ENCODE measurements at regions of chr14 and their contacts with region 1.

Region 1: DNA sequence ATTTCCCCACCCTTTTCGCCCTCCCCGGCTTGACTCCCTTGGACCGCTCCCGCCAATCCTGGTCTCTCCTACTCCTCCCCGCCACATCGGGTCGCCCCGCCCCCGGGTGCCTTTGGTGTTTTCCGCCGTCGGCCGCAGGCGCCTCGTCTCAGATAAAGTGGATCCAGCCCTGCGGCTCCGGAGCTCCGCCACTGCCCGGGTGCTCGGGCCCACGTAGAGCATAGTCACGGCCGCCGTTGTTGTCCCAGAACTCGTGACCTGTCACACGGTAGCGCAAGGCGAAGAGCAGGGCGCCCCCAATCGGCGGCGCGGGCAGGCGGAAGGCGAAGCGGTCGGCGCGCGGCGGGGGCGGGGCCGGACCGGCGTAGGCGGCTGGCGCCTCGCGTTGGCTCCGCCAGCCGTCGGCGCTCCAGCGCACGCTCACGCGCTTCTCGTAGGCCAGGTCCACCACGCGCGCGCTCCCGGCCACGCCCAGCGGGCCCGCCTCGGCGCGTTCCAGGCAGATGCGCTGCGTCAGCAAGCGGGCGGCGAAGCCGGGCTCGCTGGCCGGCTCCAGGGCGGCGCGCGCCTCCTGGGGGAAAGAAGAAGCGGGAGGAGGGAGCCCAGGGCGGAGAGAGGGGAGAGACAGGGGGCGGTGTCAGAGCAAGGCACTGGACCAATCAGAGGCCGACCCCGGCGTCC is 1.2 kb downstream of the PPP1R3E start:
- DNase-seq: peak; percentile 99
- ATAC-seq: peak; percentile 78
- H3K4me3 Mint-ChIP-seq: peak overlapping the region; percentile 99
- H3K27ac Mint-ChIP-seq: peak overlapping the region; percentile 90
- H3K4me1 Mint-ChIP-seq: peaks cover 37% of the 10 kb centered on the region
- H3K27me3 Mint-ChIP-seq: no peaks in the 10 kb centered on the region
- CTCF ChIP-seq: no peak

Region 2: DNA sequence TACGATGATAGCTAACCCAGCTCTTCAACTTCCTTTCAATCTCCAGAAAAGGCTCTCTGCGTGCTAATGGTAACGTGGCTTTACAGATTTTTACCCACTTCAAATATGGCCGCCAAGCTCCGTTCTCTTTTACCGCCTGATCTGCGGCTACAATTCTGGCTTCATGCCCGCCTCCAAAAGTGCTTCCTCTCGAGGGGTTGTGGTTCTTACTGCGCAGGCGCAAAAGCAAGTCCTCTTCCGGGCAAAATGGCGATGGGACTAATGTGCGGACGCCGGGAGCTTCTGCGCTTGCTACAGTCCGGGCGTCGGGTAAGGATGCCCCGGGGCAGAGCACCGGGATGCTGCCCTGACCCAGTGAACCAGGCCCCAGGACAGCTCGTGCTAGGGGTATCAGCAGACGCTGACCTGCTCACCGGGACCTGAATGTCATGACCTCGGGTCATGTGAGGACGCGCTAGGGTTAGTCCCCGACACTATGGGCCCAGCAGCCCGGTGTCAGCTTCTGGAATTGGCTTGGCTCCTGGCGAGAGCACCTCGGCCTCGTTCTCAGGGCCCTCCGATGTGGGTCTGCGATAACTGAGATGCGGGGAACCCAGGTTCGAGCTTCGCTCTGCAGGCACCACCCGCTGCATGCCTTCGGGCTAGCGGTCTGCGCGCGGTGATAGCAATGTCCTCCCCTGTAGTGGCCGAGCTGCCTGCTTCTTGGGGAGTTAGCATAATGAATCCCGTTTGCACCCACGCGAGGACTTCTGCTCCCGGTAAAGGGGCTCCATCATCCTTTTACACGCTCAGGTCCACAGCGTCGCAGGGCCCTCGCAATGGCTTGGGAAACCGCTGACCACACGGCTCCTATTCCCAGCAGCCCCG is 534.7 kb before region 1 on chr14 and contains the start of gene OXA1L:
- CTCF ChIA-PET with region 1: no interaction called
- POLR2A ChIA-PET with region 1: interaction called, 12 read pairs
- intact Hi-C with region 1: loop called (anchors 5 kb)
- DNase-seq: peak; percentile 79
- ATAC-seq: peak; percentile 89
- H3K4me3 Mint-ChIP-seq: peak within 1 kb of the TSS; percentile 93
- H3K27ac Mint-ChIP-seq: peak within 1 kb of the TSS; percentile 97
- H3K4me1 Mint-ChIP-seq: peaks cover 35% of the 10 kb centered on the region
- H3K27me3 Mint-ChIP-seq: no peaks in the 10 kb centered on the region
- CTCF ChIP-seq: no peak
- total RNA-seq, gene OXA1L: 174 and 190 TPM in 2 replicates

Region 3: GRCh38 chr14:23006544-23007419 is 294.6 kb before region 1 on chr14:
- CTCF ChIA-PET with region 1: no interaction called
- POLR2A ChIA-PET with region 1: interaction called, 3 read pairs
- intact Hi-C with region 1: loop called (anchors 5 kb)
- DNase-seq: peak; percentile 90
- ATAC-seq: peak; percentile 92
- H3K4me3 Mint-ChIP-seq: peak overlapping the region; percentile 94
- H3K27ac Mint-ChIP-seq: peak overlapping the region; percentile 97
- H3K4me1 Mint-ChIP-seq: peaks cover 47% of the 10 kb centered on the region
- H3K27me3 Mint-ChIP-seq: no peaks in the 10 kb centered on the region
- CTCF ChIP-seq: no peak

Region 4: GRCh38 chr14:23120541-23121251 is 180.7 kb before region 1 on chr14:
- CTCF ChIA-PET with region 1: interaction called, 15 read pairs
- POLR2A ChIA-PET with region 1: no interaction called
- intact Hi-C with region 1: loop called (anchors 1 kb)
- DNase-seq: peak; percentile 67
- ATAC-seq: peak; percentile 87
- H3K4me3 Mint-ChIP-seq: peak overlapping the region; percentile 67
- H3K27ac Mint-ChIP-seq: peak overlapping the region; percentile 89
- H3K4me1 Mint-ChIP-seq: peaks cover 36% of the 10 kb centered on the region
- H3K27me3 Mint-ChIP-seq: no peaks in the 10 kb centered on the region
- CTCF ChIP-seq: peak; percentile 84

Region 5: DNA sequence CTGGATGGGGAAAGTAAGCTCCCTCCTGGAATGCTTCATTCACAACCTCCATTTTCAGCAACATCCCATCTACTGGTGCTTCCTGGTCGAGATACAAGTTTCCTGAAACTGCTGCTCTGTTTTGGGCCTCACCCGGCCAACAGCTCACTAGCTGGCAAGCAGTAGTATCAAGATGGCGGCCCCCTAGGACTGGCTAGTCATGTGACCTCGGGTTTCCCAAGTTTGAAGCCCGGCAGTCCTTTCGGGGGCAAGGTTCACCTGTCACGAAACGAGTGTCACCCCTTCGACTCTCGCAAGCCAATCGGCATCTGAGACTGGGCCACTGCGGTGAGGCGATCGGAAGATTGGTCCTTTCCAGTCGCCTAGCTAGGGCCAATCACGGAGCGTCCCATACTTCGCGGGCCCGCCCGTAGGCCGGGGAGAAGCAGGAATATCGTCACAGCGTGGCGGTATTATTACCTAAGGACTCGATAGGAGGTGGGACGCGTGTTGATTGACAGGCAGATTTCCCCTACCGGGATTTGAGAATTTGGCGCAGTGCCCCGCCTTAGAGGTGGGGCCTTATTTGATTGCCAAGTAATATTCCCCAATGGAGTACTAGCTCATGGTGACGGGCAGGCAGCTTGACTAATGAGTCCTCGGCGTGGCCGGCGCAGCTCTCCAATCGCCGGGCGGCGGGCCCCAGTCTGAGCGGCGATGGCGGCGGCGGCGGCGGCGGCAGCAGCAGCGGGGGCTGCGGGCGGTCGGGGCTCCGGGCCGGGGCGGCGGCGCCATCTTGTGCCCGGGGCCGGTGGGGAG is 19.5 kb after region 1 on chr14 and contains the start of gene PABPN1:
- CTCF ChIA-PET with region 1: interaction called, 38 read pairs
- POLR2A ChIA-PET with region 1: interaction called, 339 read pairs
- intact Hi-C with region 1: loop called (anchors 1 kb)
- DNase-seq: peak; percentile 89
- ATAC-seq: peak; percentile 87
- H3K4me3 Mint-ChIP-seq: peak within 1 kb of the TSS; percentile 90
- H3K27ac Mint-ChIP-seq: peak within 1 kb of the TSS; percentile 98
- H3K4me1 Mint-ChIP-seq: peaks cover 26% of the 10 kb centered on the region
- H3K27me3 Mint-ChIP-seq: no peaks in the 10 kb centered on the region
- CTCF ChIP-seq: no peak
- total RNA-seq, gene PABPN1: 259 and 264 TPM in 2 replicates

Region 6: GRCh38 chr14:23409475-23409874 is 108.0 kb after region 1 on chr14:
- CTCF ChIA-PET with region 1: no interaction called
- POLR2A ChIA-PET with region 1: no interaction called
- intact Hi-C with region 1: no loop called
- DNase-seq: no peak
- ATAC-seq: no peak
- H3K4me3 Mint-ChIP-seq: no peak overlapping the region
- H3K27ac Mint-ChIP-seq: no peak overlapping the region
- H3K4me1 Mint-ChIP-seq: peaks cover 14% of the 10 kb centered on the region
- H3K27me3 Mint-ChIP-seq: peaks cover 44% of the 10 kb centered on the region
- CTCF ChIP-seq: no peak

Region 7: DNA sequence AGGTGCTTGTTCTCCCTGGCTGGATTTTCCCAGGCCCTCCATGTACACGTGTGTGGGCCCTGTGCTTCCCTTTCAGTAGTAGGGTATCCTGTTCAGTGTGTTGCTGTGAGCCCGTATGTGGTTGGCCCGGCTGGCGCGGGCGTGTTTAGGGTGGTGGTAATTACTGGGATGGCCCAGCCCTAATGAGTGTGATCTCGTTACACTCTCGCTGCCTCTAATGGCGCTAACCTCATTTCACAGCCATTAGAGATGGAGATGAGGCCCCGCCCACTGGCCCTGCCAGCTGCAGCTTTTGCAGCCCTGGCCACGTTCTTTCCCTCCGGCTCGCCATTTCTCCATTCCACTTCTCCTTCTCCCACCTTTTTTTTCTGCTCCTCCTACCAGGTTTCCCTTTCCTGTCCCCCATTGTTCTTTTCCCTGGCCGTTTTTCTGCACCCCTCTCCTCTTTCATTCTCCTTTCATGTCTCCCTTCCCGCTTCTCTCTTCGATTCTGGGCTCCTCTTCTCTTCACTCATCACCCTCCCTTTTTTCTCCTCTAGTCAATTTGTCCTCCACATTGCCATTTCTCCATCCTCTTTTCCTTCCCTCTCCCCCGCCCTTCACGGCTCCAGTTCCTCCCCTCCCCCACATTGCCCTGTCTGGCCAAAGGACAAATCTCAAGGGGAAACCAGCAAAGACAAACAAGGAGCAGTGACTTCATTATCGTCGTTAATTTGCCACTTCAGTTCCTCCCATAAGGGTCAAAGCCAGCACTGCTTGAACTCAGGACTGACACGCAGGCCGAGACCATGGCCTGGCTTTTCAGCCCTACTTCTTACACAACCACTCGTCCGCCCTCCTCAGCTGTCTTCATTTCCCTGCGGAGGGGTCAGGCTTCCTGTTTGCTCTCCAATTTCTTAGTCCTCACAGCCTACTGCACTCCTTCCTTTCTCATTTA is 243.4 kb after region 1 on chr14:
- CTCF ChIA-PET with region 1: no interaction called
- POLR2A ChIA-PET with region 1: no interaction called
- intact Hi-C with region 1: no loop called
- DNase-seq: no peak
- ATAC-seq: no peak
- H3K4me3 Mint-ChIP-seq: no peak overlapping the region
- H3K27ac Mint-ChIP-seq: no peak overlapping the region
- H3K4me1 Mint-ChIP-seq: no peaks in the 10 kb centered on the region
- H3K27me3 Mint-ChIP-seq: peaks cover under 1% of the 10 kb centered on the region
- CTCF ChIP-seq: no peak

Region 8: GRCh38 chr14:23555882-23556699 is 254.7 kb after region 1 on chr14 and contains the start of gene THTPA:
- CTCF ChIA-PET with region 1: no interaction called
- POLR2A ChIA-PET with region 1: no interaction called
- intact Hi-C with region 1: loop called (anchors 1 kb)
- DNase-seq: peak; percentile 88
- ATAC-seq: peak; percentile 79
- H3K4me3 Mint-ChIP-seq: peak within 1 kb of the TSS; percentile 94
- H3K27ac Mint-ChIP-seq: peak within 1 kb of the TSS; percentile 95
- H3K4me1 Mint-ChIP-seq: peaks cover 30% of the 10 kb centered on the region
- H3K27me3 Mint-ChIP-seq: no peaks in the 10 kb centered on the region
- CTCF ChIP-seq: no peak
- total RNA-seq, gene THTPA: 18.0 and 18.6 TPM in 2 replicates

Measured in activated B cell treated with CpG ODN at 0.5 μM for 24 hours (primary cell).